AG04450 (cell line): ENCODE measurements at regions of chr3 and their contacts with region 1.

Region 1: GRCh38 chr3:111895079-111895478 is 36.0 kb downstream of the PHLDB2 start:
- DNase-seq: no peak
- H3K4me3 ChIP-seq: no peak overlapping the region
- H3K27ac ChIP-seq: no peak overlapping the region
- H3K27me3 ChIP-seq: no peaks in the 10 kb centered on the region
- CTCF ChIP-seq: peak; percentile 74

Region 2: DNA sequence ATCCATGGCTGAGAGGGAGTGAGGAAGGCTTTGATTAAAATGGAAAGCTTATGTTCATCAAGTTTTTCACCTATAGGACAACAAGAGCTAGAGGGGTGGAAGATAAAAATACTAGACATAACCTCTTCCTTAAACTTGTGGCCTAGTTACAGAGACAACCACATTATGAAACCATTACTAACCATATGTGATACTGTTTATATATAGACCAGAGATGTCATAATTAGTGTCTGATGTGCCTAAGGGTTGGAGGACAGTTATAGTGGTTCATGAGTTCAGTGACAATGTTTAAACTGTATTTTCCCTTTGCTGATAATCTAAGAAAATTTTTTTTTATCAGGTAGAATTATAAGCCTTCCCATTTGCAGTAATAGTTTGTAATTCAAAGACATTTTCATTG is 12.3 kb before region 1 on chr3:
- CTCF ChIA-PET with region 1: interaction called, 12 read pairs
- POLR2A ChIA-PET with region 1: no interaction called
- DNase-seq: no peak
- H3K4me3 ChIP-seq: no peak overlapping the region
- H3K27ac ChIP-seq: no peak overlapping the region
- H3K27me3 ChIP-seq: no peaks in the 10 kb centered on the region
- CTCF ChIP-seq: no peak

Region 3: GRCh38 chr3:111998636-111999483 is 103.8 kb after region 1 on chr3 and contains the start of gene TAGLN3:
- CTCF ChIA-PET with region 1: no interaction called
- POLR2A ChIA-PET with region 1: no interaction called
- DNase-seq: no peak
- H3K4me3 ChIP-seq: peak within 1 kb of the TSS; percentile 55
- H3K27ac ChIP-seq: peak within 1 kb of the TSS; percentile 49
- H3K27me3 ChIP-seq: no peaks in the 10 kb centered on the region
- CTCF ChIP-seq: no peak
- polyA plus RNA-seq, gene TAGLN3: 2.2 and 2.5 TPM in 2 replicates

Region 4: DNA sequence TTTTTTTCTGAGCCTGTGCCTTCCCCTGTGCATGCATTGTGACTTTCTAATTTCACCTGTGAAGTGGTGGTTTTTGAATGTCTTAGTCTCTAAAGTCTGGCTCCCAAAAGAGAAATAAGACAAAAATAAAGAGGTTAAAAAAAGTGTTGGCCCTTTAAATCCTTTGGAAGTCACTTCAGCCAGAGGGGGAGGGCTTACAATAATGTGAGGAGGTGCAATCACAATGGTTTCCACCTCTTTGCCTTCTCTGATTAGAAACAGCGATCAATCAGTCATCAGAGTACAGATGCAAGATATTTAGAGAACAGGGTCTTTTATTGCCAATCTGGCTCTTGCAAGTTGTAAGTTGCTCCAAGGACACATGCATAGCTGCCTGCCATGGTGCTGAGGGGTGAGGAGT is 302.1 kb after region 1 on chr3:
- CTCF ChIA-PET with region 1: no interaction called
- POLR2A ChIA-PET with region 1: no interaction called
- DNase-seq: no peak
- H3K4me3 ChIP-seq: no peak overlapping the region
- H3K27ac ChIP-seq: no peak overlapping the region
- H3K27me3 ChIP-seq: no peaks in the 10 kb centered on the region
- CTCF ChIP-seq: no peak